Calu3 (cell line): ENCODE measurements at regions of chr2 and their contacts with region 1.

Region 1: DNA sequence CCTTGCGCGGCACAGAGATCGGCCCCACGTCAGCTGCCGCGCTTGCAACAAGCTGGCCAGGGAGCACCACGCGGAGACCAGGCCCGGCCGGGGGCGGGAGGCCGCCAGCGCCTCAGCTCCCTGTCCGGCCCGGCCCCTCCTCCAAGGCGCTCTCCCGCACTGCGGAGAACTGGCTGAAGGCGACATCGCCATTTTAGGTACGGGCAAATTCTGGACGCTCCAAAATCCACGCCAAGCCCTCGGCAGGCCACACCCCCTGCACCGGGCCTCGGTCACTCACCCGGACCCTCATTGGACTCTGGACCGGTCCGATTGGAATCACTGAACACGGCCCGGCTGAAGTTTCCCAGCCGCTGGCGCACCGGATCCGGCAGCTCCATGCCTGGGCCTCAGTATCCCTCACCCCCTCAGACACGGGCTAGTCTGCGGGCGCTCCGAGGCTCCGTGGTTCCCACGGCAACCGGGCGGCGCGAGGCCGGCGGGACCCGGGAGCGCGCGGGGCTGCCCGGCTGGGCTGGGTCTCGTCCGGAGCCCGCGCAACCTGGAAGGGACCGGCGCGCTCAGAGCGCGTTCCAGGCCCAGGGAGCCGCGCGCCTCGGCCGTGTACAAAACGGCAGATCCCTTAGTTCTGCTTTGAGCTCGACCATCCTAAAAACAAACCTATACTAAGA is at the start of gene TMEM17:
- DNase-seq: peak; percentile 89
- H3K4me3 Mint-ChIP-seq: peak within 1 kb of the TSS; percentile 72
- H3K27ac Mint-ChIP-seq: peak within 1 kb of the TSS; percentile 73
- H3K4me1 Mint-ChIP-seq: peaks cover 23% of the 10 kb centered on the region
- H3K27me3 Mint-ChIP-seq: no peaks in the 10 kb centered on the region
- CTCF ChIP-seq: no peak
- total RNA-seq, gene TMEM17: 3.3 and 3.6 TPM in 2 replicates

Region 2: GRCh38 chr2:62227386-62228075 is 278.4 kb before region 1 on chr2:
- CTCF ChIA-PET with region 1: no interaction called
- intact Hi-C with region 1: no loop called
- DNase-seq: no peak
- H3K4me3 Mint-ChIP-seq: no peak overlapping the region
- H3K27ac Mint-ChIP-seq: no peak overlapping the region
- H3K4me1 Mint-ChIP-seq: no peaks in the 10 kb centered on the region
- H3K27me3 Mint-ChIP-seq: no peaks in the 10 kb centered on the region
- CTCF ChIP-seq: no peak

Region 3: GRCh38 chr2:62485761-62486438 is 20.0 kb before region 1 on chr2:
- CTCF ChIA-PET with region 1: no interaction called
- intact Hi-C with region 1: no loop called
- DNase-seq: no peak
- H3K4me3 Mint-ChIP-seq: no peak overlapping the region
- H3K27ac Mint-ChIP-seq: no peak overlapping the region
- H3K4me1 Mint-ChIP-seq: peaks cover 19% of the 10 kb centered on the region
- H3K27me3 Mint-ChIP-seq: no peaks in the 10 kb centered on the region
- CTCF ChIP-seq: no peak

Region 4: DNA sequence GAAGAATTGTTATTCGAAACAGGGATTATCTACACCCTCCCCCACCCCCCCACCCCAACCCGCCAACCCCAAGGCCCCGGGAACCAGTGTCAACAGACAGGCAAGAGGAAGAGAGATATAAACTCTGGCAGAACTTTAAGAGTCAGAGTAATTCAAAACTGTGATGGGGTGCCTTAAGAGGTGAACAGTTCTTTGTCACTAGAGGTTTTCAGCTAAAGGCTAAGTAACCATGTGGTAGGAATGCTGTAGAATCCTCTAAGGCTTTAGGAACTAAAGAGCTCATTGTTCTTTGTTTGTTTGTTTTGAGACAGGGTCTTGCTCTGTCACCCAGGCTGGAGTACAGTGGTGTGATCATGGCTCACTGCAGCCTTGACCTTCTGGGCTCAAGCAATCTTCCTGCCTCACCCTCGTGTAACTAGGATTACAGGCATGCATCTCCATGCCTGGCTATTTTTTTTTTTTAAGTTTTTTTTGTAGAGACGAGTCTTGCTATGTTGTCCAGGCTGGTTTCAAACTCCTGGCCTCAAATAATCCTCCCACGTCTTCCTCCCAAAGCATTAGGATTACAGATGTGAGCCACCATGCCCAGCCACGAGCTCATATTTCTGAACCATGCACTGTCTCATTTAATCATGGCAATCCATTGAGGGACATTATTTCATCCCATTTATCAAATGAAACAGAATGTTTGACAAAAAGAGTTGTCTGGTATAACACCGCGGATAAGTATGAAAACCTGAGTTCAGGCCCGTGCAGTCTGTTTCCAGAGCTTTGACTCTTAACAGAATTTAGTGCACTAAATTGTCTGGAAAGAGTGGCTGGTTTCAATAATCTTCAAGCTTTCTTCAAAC is 20.9 kb after region 1 on chr2:
- CTCF ChIA-PET with region 1: interaction called, 10 read pairs
- intact Hi-C with region 1: no loop called
- DNase-seq: peak; percentile 13
- H3K4me3 Mint-ChIP-seq: peak overlapping the region; percentile 28
- H3K27ac Mint-ChIP-seq: peak overlapping the region; percentile 92
- H3K4me1 Mint-ChIP-seq: peaks cover 25% of the 10 kb centered on the region
- H3K27me3 Mint-ChIP-seq: no peaks in the 10 kb centered on the region
- CTCF ChIP-seq: no peak

Region 5: GRCh38 chr2:62568983-62569837 is 63.3 kb after region 1 on chr2:
- CTCF ChIA-PET with region 1: no interaction called
- intact Hi-C with region 1: no loop called
- DNase-seq: peak; percentile 6
- H3K4me3 Mint-ChIP-seq: peak overlapping the region; percentile 70
- H3K27ac Mint-ChIP-seq: peak overlapping the region; percentile 70
- H3K4me1 Mint-ChIP-seq: peaks cover 48% of the 10 kb centered on the region
- H3K27me3 Mint-ChIP-seq: no peaks in the 10 kb centered on the region
- CTCF ChIP-seq: no peak